Activated CD4-positive, alpha-beta T cell treated with anti-CD3 and anti-CD28 coated beads for 36 hours (primary cell): ENCODE measurements at regions of chr19 and their contacts with region 1.

Region 1: GRCh38 chr19:36054119-36054732 is at the start of gene THAP8:
- DNase-seq: peak; percentile 100
- ATAC-seq: peak; percentile 91
- H3K4me3 Mint-ChIP-seq: peak within 1 kb of the TSS; percentile 92
- H3K27ac Mint-ChIP-seq: peak within 1 kb of the TSS; percentile 97
- H3K4me1 Mint-ChIP-seq: peaks cover 14% of the 10 kb centered on the region
- H3K27me3 Mint-ChIP-seq: no peaks in the 10 kb centered on the region
- total RNA-seq, gene THAP8: 3.1 to 3.4 TPM

Region 2: DNA sequence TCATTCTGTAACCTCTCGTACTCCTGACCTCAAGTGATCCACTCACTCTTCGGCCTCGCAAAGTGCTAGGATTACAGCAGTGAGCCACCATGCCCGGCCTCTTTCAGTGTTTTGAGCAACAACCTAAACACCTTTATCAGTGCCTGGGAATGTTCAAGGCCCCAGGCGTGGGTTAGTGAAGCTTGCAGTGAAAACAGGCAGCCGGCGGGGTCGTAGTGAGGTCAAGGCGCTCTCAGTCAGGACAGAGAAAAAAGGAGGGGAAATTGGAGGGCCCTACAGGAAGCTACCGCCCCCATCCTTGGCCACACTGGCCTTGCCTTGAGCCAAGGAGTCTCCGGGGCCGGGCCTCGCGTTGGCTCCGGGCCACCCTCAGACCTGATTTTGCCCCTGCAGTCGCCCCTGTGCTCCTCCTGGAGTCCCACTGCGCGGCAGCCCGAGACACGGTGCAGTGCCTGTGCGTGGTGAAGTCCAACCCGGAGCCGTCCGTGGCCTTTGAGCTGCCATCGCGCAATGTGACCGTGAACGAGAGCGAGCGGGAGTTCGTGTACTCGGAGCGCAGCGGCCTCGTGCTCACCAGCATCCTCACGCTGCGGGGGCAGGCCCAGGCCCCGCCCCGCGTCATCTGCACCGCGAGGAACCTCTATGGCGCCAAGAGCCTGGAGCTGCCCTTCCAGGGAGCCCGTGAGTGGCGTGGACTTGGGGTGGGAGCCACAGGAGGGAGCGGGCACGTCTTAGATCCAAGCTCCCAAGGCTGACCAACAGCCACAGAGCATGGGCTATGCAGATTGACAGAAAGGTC is 744.5 kb before region 1 on chr19:
- CTCF ChIA-PET with region 1: no interaction called
- POLR2A ChIA-PET with region 1: no interaction called
- intact Hi-C with region 1: no loop called
- DNase-seq: no peak
- ATAC-seq: no peak
- H3K4me3 Mint-ChIP-seq: no peak overlapping the region
- H3K27ac Mint-ChIP-seq: no peak overlapping the region
- H3K4me1 Mint-ChIP-seq: no peaks in the 10 kb centered on the region
- H3K27me3 Mint-ChIP-seq: no peaks in the 10 kb centered on the region

Region 3: GRCh38 chr19:35702223-35703012 is 351.8 kb before region 1 on chr19:
- CTCF ChIA-PET with region 1: no interaction called
- POLR2A ChIA-PET with region 1: no interaction called
- intact Hi-C with region 1: loop called in 1 of 2 experiments (anchors 2 kb)
- DNase-seq: peak; percentile 97
- ATAC-seq: peak; percentile 99
- H3K4me3 Mint-ChIP-seq: peak overlapping the region; percentile 83
- H3K27ac Mint-ChIP-seq: peak overlapping the region; percentile 99
- H3K4me1 Mint-ChIP-seq: peaks cover 8% of the 10 kb centered on the region
- H3K27me3 Mint-ChIP-seq: no peaks in the 10 kb centered on the region

Region 4: DNA sequence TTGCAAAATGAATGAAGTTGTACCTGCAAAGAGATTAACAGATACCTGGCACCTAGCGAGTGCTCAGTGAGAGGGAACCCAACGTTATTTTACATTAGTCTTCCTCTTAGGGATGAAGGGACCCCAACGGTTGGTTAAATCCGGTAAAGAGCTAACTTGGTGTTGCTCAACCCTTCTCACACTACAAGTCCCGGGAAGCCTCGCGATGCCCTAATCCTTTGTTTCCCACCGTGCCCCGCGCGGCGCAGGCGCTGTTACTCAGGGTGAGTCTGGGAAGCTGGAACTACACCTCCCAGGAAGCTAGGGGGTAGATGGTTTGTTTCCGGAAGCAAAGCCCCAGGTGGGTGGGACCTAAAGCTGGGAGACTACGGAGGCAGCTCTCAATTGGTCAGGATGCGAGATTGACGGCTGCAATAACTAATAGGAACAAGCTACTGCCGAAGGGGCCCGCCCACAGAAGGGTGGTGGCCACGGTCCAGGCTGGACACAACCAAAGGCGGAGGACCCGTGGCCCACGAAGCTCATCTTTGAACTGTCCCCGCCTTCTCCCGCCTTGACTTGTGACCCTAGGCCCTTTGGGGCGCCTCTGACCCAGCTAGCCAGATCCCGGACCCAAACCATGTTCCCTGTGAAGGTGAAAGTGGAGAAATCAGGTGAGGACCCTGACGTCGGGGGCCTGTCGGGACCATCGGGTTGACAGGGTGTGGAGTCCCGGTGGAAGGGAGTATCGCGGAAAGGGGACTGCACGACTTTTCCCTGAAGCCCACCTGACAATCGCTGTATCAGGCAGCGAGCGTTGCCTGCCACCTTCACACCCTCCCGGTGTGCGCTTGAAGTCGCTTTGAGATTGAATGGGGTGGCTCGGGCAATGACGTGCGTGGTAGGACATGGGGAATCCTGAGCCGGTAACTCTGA is 305.9 kb before region 1 on chr19 and contains the start of gene LIN37:
- CTCF ChIA-PET with region 1: interaction called, 3 read pairs
- POLR2A ChIA-PET with region 1: no interaction called
- intact Hi-C with region 1: loop called in 1 of 2 experiments (anchors 1 kb)
- DNase-seq: peak; percentile 99
- ATAC-seq: peak; percentile 81
- H3K4me3 Mint-ChIP-seq: peak within 1 kb of the TSS; percentile 89
- H3K27ac Mint-ChIP-seq: peak within 1 kb of the TSS; percentile 94
- H3K4me1 Mint-ChIP-seq: peaks cover 40% of the 10 kb centered on the region
- H3K27me3 Mint-ChIP-seq: no peaks in the 10 kb centered on the region
- total RNA-seq, gene LIN37: 8.4 to 12.7 TPM

Region 5: DNA sequence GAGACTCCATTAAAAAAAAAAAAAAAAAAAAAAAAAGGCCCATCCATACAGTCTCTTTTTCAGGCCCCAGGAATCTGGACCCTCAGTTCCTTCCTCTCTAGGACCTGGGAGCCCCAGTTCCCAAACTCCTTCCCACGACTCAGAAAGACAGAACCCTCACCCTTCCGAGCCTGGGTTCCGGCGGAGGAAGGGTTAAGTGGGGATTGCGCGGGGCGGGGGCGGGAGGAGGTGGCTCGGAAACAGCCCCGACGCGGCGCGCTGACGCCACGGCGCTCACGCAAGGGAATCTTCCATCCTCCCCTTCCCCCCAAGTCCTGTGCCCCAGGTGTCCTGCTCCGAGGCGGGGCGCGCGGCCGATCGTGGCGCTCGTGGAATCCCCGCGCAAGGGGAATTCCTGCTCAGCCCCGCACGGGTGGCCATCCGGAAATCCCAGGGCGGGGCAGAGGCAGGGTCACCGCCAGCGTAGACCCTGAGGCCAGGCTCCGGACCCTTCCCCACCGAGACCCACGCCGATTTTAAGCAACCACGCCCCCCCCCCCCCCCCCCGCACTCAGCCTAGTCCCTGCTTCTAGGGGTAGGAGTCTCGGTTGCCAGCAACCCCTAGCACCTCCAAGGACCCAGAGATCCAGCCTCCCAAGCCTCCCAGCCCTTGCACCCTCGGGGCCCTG is 154.5 kb before region 1 on chr19:
- CTCF ChIA-PET with region 1: no interaction called
- POLR2A ChIA-PET with region 1: no interaction called
- intact Hi-C with region 1: loop called in 1 of 2 experiments (anchors 1 kb)
- DNase-seq: peak; percentile 94
- ATAC-seq: peak; percentile 54
- H3K4me3 Mint-ChIP-seq: peak overlapping the region; percentile 75
- H3K27ac Mint-ChIP-seq: peak overlapping the region; percentile 94
- H3K4me1 Mint-ChIP-seq: peaks cover 65% of the 10 kb centered on the region
- H3K27me3 Mint-ChIP-seq: no peaks in the 10 kb centered on the region

Region 6: GRCh38 chr19:36041831-36042230 is 12.4 kb before region 1 on chr19:
- CTCF ChIA-PET with region 1: no interaction called
- POLR2A ChIA-PET with region 1: no interaction called
- intact Hi-C with region 1: no loop called
- DNase-seq: no peak
- ATAC-seq: no peak
- H3K4me3 Mint-ChIP-seq: no peak overlapping the region
- H3K27ac Mint-ChIP-seq: no peak overlapping the region
- H3K4me1 Mint-ChIP-seq: peaks cover 5% of the 10 kb centered on the region
- H3K27me3 Mint-ChIP-seq: no peaks in the 10 kb centered on the region

Region 7: GRCh38 chr19:36073121-36073872 is 19.1 kb after region 1 on chr19:
- CTCF ChIA-PET with region 1: no interaction called
- POLR2A ChIA-PET with region 1: no interaction called
- intact Hi-C with region 1: no loop called
- DNase-seq: no peak
- ATAC-seq: no peak
- H3K4me3 Mint-ChIP-seq: no peak overlapping the region
- H3K27ac Mint-ChIP-seq: no peak overlapping the region
- H3K4me1 Mint-ChIP-seq: no peaks in the 10 kb centered on the region
- H3K27me3 Mint-ChIP-seq: no peaks in the 10 kb centered on the region

Region 8: GRCh38 chr19:36093146-36093662 is 39.0 kb after region 1 on chr19:
- CTCF ChIA-PET with region 1: no interaction called
- POLR2A ChIA-PET with region 1: no interaction called
- intact Hi-C with region 1: loop called in 1 of 2 experiments (anchors 1 kb)
- DNase-seq: peak; percentile 59
- ATAC-seq: peak; percentile 87
- H3K4me3 Mint-ChIP-seq: no peak overlapping the region
- H3K27ac Mint-ChIP-seq: peak overlapping the region; percentile 47
- H3K4me1 Mint-ChIP-seq: peaks cover 19% of the 10 kb centered on the region
- H3K27me3 Mint-ChIP-seq: no peaks in the 10 kb centered on the region

Region 9: GRCh38 chr19:36169084-36169760 is 115.0 kb after region 1 on chr19:
- CTCF ChIA-PET with region 1: interaction called, 3 read pairs
- POLR2A ChIA-PET with region 1: no interaction called
- intact Hi-C with region 1: loop called in 1 of 2 experiments (anchors 2 kb)
- DNase-seq: no peak
- ATAC-seq: no peak
- H3K4me3 Mint-ChIP-seq: no peak overlapping the region
- H3K27ac Mint-ChIP-seq: no peak overlapping the region
- H3K4me1 Mint-ChIP-seq: peaks cover 4% of the 10 kb centered on the region
- H3K27me3 Mint-ChIP-seq: no peaks in the 10 kb centered on the region